A673 (cell line): ENCODE measurements at regions of chr11 and their contacts with region 1.

Region 1: DNA sequence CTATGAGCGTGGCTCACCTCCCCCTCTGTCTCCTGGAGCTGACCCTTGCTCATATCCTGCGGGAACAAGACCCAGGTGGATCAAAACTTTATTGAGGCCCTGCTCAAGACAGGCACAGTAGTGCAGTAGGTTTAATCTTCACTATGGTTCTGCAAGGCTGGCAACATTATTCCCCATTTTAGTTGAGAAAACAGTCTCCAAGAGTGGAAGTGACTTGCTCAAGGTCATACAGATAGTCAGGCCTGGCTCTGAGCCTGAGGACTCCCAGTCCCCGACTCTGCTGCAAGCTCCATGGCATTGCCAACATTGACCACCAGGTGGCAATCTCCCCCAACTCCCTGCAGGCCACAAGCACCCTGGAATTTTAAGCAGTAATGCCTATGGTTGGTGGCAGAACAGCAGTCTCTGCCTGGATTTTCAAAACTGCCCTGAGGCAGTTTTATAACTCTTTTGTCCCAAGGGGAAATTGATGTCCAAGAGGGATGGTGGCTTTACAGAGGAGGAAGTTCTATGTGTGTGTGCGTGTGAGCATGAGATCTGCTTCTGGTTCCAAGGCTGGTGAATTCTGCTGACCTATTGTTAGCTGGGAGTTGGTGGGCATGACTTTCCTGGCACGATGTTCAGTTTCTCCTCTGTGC is 34.1 kb downstream of the NEU3 start:
- DNase-seq: peak; percentile 91
- H3K4me3 ChIP-seq: no peak overlapping the region
- H3K27ac ChIP-seq: no peak overlapping the region
- H3K4me1 ChIP-seq: no peaks in the 10 kb centered on the region
- H3K27me3 ChIP-seq: no peaks in the 10 kb centered on the region
- CTCF ChIP-seq: peak; percentile 98

Region 2: GRCh38 chr11:74895340-74896116 is 127.3 kb before region 1 on chr11:
- CTCF ChIA-PET with region 1: no interaction called
- POLR2A ChIA-PET with region 1: no interaction called
- intact Hi-C with region 1: no loop called
- DNase-seq: no peak
- H3K4me3 ChIP-seq: no peak overlapping the region
- H3K27ac ChIP-seq: no peak overlapping the region
- H3K4me1 ChIP-seq: no peaks in the 10 kb centered on the region
- H3K27me3 ChIP-seq: no peaks in the 10 kb centered on the region
- CTCF ChIP-seq: no peak

Region 3: DNA sequence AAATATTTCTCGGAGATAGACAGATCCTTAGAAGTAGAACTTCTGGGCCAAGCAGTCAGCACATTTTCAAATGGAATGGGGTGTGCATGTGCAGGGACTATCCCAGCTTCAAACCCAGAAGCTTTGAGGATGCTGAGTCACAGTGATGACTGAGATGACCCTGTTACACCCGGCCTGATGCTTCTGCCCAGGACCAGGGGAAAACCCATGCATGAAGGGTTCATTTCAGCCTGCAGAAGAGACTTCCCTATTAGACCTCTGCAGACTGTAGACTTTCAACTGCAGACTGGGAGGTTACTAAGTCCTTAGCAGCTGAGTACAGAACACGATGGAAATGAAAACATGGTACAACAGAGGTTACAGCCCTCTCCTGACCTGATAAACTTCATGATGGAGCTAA is 77.4 kb after region 1 on chr11:
- CTCF ChIA-PET with region 1: no interaction called
- POLR2A ChIA-PET with region 1: no interaction called
- intact Hi-C with region 1: no loop called
- DNase-seq: no peak
- H3K4me3 ChIP-seq: no peak overlapping the region
- H3K27ac ChIP-seq: no peak overlapping the region
- H3K4me1 ChIP-seq: no peaks in the 10 kb centered on the region
- H3K27me3 ChIP-seq: peaks cover 3% of the 10 kb centered on the region
- CTCF ChIP-seq: no peak

Region 4: GRCh38 chr11:75204685-75205563 is 182.0 kb after region 1 on chr11:
- CTCF ChIA-PET with region 1: interaction called, 33 read pairs
- POLR2A ChIA-PET with region 1: no interaction called
- intact Hi-C with region 1: loop called (anchors 1 kb)
- DNase-seq: peak; percentile 87
- H3K4me3 ChIP-seq: no peak overlapping the region
- H3K27ac ChIP-seq: no peak overlapping the region
- H3K4me1 ChIP-seq: no peaks in the 10 kb centered on the region
- H3K27me3 ChIP-seq: peaks cover 24% of the 10 kb centered on the region
- CTCF ChIP-seq: peak; percentile 99

Region 5: DNA sequence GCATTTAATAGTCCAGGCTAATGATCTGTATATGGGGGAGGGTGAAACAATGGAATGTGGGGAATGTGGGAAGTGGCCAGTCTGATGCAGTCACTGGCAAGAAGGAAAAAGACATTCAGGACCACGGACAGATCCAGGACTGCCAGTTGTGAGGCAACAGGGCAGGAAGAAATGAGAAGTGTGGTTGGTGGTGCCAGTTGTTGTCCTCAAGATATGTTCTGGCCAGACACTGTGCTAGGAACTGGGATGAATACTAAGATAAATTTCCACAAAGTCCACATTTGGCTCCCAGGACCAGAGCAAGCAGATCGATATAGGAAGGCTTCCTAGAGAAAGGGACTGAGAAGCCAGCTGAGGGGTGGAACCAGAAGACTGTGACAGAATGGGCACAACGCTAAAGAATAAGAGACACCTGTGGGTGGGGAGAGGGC is 210.9 kb after region 1 on chr11:
- CTCF ChIA-PET with region 1: no interaction called
- POLR2A ChIA-PET with region 1: no interaction called
- intact Hi-C with region 1: no loop called
- DNase-seq: peak; percentile 70
- H3K4me3 ChIP-seq: no peak overlapping the region
- H3K27ac ChIP-seq: no peak overlapping the region
- H3K4me1 ChIP-seq: no peaks in the 10 kb centered on the region
- H3K27me3 ChIP-seq: no peaks in the 10 kb centered on the region
- CTCF ChIP-seq: no peak